CD14-positive monocyte (primary cell): ENCODE measurements at regions of chr10 and their contacts with region 1.

Region 1: GRCh38 chr10:73246783-73247508 is at the start of gene DNAJC9:
- DNase-seq: peak; percentile 84 to 92 (median 92)
- H3K4me3 ChIP-seq: peak within 1 kb of the TSS; percentile 69 to 92 (median 71)
- H3K4me3 Mint-ChIP-seq: peak within 1 kb of the TSS; percentile 91 to 96
- H3K27ac ChIP-seq: peak within 1 kb of the TSS; percentile 51 to 83
- H3K27ac Mint-ChIP-seq: peak within 1 kb of the TSS; percentile 81 to 94 (median 90)
- H3K4me1 ChIP-seq: peaks cover 33 to 53% of the 10 kb centered on the region in 2 donors
- H3K4me1 Mint-ChIP-seq: peaks cover 50% of the 10 kb centered on the region
- H3K27me3 ChIP-seq: no peaks in the 10 kb centered on the region
- H3K27me3 Mint-ChIP-seq: peaks cover 0 to 2% (median 0%) of the 10 kb centered on the region in 3 donors
- CTCF ChIP-seq: no peak
- polyA plus RNA-seq, gene DNAJC9: 2.3 to 7.2 (median 2.4) TPM

Region 2: DNA sequence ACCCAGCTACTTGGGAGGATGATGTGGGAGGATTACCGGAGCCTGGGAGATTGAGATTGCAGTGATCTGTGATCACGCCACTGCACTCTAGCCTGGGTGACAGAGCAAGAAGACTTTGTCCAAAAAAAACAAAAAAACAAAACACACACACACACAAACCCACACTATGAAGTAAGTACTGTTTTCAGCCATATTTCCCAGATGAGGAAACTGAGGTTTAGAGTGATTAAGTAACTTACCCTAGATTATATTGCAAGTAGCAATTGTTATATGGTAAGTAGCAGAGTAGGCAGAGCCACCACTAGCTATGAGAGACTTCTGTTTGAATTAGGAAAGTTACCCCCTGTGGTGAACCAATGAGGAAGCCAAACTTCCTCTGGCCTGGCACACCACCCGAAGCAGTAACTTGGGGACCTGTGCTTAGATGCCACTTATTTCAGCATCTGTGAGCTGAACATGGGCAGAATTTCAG is 493.1 kb before region 1 on chr10:
- intact Hi-C with region 1: no loop called
- DNase-seq: peak; percentile 29 to 46 (median 46)
- H3K4me3 ChIP-seq: peak overlapping the region in 1 of 3 experiments; percentile 13
- H3K4me3 Mint-ChIP-seq: peak overlapping the region in 1 of 2 donors; percentile 68
- H3K27ac ChIP-seq: peak overlapping the region in 1 of 2 donors; percentile 43
- H3K27ac Mint-ChIP-seq: peak overlapping the region in 5 of 7 donors; percentile 1 to 82 (median 53)
- H3K4me1 ChIP-seq: peaks cover 19 to 24% of the 10 kb centered on the region in 2 donors
- H3K4me1 Mint-ChIP-seq: peaks cover 37% of the 10 kb centered on the region
- H3K27me3 ChIP-seq: no peaks in the 10 kb centered on the region
- H3K27me3 Mint-ChIP-seq: peaks cover 0 to 2% (median 0%) of the 10 kb centered on the region in 3 donors
- CTCF ChIP-seq: no peak

Region 3: GRCh38 chr10:73096449-73097304 is 150.3 kb before region 1 on chr10 and contains the start of gene P4HA1:
- intact Hi-C with region 1: loop called in 1 of 2 experiments (anchors 5 kb)
- DNase-seq: peak; percentile 98 to 99 (median 99)
- H3K4me3 ChIP-seq: peak within 1 kb of the TSS; percentile 58 to 98 (median 93)
- H3K4me3 Mint-ChIP-seq: peak within 1 kb of the TSS; percentile 95 to 96
- H3K27ac ChIP-seq: peak within 1 kb of the TSS; percentile 92 to 96
- H3K27ac Mint-ChIP-seq: peak within 1 kb of the TSS; percentile 87 to 97 (median 95)
- H3K4me1 ChIP-seq: peaks cover 13 to 21% of the 10 kb centered on the region in 2 donors
- H3K4me1 Mint-ChIP-seq: peaks cover 23% of the 10 kb centered on the region
- H3K27me3 ChIP-seq: no peaks in the 10 kb centered on the region
- H3K27me3 Mint-ChIP-seq: no peaks in the 10 kb centered on the region
- CTCF ChIP-seq: peak; percentile 79
- polyA plus RNA-seq, gene P4HA1: 20.1 to 44.3 (median 43.9) TPM

Region 4: DNA sequence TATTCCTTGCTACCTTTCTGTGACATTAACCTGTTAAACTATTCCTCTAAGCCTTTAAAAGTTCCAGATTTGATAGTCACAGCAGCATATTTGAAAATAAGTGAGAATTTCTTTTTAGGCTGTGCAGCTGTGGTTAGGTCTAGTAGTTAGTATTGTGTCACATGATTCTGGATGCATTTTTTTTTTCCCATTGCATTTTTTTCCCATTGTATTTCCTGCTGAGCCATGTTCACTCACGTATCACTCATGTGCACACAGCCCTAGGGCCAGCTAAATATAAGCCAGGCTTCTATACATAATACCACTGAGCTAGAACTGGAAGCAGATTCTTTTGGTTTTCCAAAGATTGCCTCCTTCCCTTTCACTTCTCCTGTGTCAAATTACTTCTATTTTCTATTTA is 37.2 kb before region 1 on chr10:
- intact Hi-C with region 1: no loop called
- DNase-seq: no peak
- H3K4me3 ChIP-seq: no peak overlapping the region
- H3K4me3 Mint-ChIP-seq: no peak overlapping the region
- H3K27ac ChIP-seq: no peak overlapping the region
- H3K27ac Mint-ChIP-seq: no peak overlapping the region
- H3K4me1 ChIP-seq: no peaks in the 10 kb centered on the region
- H3K4me1 Mint-ChIP-seq: no peaks in the 10 kb centered on the region
- H3K27me3 ChIP-seq: no peaks in the 10 kb centered on the region
- H3K27me3 Mint-ChIP-seq: no peaks in the 10 kb centered on the region
- CTCF ChIP-seq: no peak

Region 5: DNA sequence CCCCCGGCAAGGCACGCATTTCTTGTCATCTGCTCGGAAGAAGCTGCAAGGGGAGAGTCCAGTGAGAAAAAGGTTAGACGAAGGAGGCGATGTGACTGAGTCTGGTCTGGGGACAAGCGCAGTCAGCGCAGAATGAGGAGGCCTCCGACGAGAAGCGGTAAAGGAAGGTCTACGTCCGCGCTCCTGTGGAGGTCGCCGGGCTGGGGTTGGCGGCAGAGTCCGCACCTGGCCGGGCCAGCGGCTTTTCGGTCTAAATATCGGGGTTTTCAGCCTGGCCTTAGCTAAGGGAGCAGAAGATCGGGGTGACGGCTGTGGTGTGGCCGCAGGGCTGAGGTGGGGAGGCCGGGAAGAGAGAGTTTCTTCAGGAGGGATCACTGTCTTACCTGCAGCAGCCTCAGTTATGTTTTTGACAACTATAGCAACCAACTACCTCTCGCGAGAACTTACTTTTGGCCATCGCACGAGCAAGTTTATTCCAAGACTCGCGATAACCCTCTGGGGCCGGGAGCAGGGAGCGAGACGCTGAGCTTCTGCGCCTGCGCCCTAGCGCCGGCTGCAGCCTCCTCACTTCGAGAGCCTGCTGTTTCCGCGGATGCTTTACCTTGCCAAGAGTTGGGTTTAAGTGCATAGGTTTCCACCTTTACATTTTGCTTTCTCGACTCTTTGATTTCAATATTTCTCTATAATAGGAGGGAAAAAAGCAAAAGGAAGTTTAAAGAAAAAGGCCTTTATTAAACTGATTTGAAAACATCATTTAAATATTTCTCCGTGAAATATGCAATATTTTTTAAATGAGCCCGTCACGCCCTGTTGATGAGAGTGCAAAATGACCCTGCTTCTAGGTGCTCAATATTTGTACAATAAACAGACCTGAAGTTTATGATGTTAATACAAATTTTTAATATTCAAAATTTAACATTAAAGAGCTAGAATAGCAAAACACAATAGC is 111.7 kb after region 1 on chr10 and contains the start of gene CFAP70:
- intact Hi-C with region 1: loop called in 1 of 2 experiments (anchors 10 kb)
- DNase-seq: peak; percentile 85 to 91 (median 90)
- H3K4me3 ChIP-seq: peak within 1 kb of the TSS; percentile 46 to 77 (median 51)
- H3K4me3 Mint-ChIP-seq: peak within 1 kb of the TSS; percentile 95 to 99
- H3K27ac ChIP-seq: peak within 1 kb of the TSS in 1 of 2 donors; percentile 32
- H3K27ac Mint-ChIP-seq: peak within 1 kb of the TSS; percentile 56 to 88 (median 78)
- H3K4me1 ChIP-seq: peaks cover 11 to 23% of the 10 kb centered on the region in 2 donors
- H3K4me1 Mint-ChIP-seq: peaks cover 27% of the 10 kb centered on the region
- H3K27me3 ChIP-seq: peaks cover 2 to 5% of the 10 kb centered on the region in 2 donors
- H3K27me3 Mint-ChIP-seq: peaks cover 10 to 19% (median 16%) of the 10 kb centered on the region in 3 donors
- CTCF ChIP-seq: no peak
- polyA plus RNA-seq, gene CFAP70: 0.13 to 1.1 TPM in 2 of 3 donors, not detected in the other

Region 6: DNA sequence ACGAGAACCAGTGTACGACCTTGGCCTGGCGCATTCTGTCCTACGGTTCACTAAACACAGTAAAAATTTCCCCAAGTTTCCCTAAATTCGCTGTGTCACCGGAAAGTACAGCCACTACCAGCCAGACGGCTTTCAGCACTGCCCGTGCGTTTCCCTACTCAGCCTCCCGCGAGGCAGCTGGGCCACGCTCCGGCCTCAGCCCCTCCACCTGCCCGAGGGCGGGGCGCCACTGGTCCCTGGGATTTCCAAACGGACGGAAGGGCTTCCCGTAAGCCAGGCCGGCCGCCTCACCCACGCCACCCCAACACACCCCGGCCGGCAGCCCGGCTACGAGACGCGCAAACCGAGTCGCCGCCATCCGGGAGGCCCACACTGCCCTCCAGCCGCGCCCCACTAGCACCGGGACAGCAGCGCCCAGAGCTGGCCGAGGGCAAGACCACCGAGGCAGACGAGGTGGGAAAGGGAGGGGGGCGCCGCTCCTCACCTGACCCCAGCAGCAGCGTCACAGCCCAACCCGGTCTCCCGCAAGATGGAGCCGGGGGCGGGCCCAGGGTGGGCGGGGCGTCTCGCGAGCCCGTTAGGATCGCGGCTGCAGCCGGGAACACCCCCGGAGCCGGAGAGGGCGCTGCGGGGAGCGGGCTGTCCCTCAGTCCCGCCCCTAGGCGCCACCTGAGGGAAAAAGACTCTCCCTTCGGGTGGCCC is 166.7 kb after region 1 on chr10 and contains the start of gene ANXA7:
- intact Hi-C with region 1: loop called (anchors 5 to 10 kb)
- DNase-seq: peak; percentile 79 to 91 (median 83)
- H3K4me3 ChIP-seq: peak within 1 kb of the TSS; percentile 80 to 88 (median 81)
- H3K4me3 Mint-ChIP-seq: peak within 1 kb of the TSS; percentile 84 to 92
- H3K27ac ChIP-seq: peak within 1 kb of the TSS; percentile 80 to 96
- H3K27ac Mint-ChIP-seq: peak within 1 kb of the TSS; percentile 90 to 99 (median 95)
- H3K4me1 ChIP-seq: peaks cover 18 to 24% of the 10 kb centered on the region in 2 donors
- H3K4me1 Mint-ChIP-seq: peaks cover 44% of the 10 kb centered on the region
- H3K27me3 ChIP-seq: peaks cover 4 to 10% of the 10 kb centered on the region in 2 donors
- H3K27me3 Mint-ChIP-seq: peaks cover 5 to 16% (median 8%) of the 10 kb centered on the region in 3 donors
- CTCF ChIP-seq: no peak
- polyA plus RNA-seq, gene ANXA7: 84.6 to 199 (median 173) TPM

Region 7: GRCh38 chr10:73545357-73545756 is 298.4 kb after region 1 on chr10:
- intact Hi-C with region 1: no loop called
- DNase-seq: no peak
- H3K4me3 ChIP-seq: no peak overlapping the region
- H3K4me3 Mint-ChIP-seq: no peak overlapping the region
- H3K27ac ChIP-seq: no peak overlapping the region
- H3K27ac Mint-ChIP-seq: peak overlapping the region in 1 of 7 donors; percentile 26
- H3K4me1 ChIP-seq: no peaks in the 10 kb centered on the region
- H3K4me1 Mint-ChIP-seq: peaks cover 7% of the 10 kb centered on the region
- H3K27me3 ChIP-seq: no peaks in the 10 kb centered on the region
- H3K27me3 Mint-ChIP-seq: peaks cover 0 to 1% (median 0%) of the 10 kb centered on the region in 3 donors
- CTCF ChIP-seq: no peak